Naive thymus-derived CD4-positive, alpha-beta T cell (primary cell): ENCODE measurements at regions of chr16 and their contacts with region 1.

Region 1: DNA sequence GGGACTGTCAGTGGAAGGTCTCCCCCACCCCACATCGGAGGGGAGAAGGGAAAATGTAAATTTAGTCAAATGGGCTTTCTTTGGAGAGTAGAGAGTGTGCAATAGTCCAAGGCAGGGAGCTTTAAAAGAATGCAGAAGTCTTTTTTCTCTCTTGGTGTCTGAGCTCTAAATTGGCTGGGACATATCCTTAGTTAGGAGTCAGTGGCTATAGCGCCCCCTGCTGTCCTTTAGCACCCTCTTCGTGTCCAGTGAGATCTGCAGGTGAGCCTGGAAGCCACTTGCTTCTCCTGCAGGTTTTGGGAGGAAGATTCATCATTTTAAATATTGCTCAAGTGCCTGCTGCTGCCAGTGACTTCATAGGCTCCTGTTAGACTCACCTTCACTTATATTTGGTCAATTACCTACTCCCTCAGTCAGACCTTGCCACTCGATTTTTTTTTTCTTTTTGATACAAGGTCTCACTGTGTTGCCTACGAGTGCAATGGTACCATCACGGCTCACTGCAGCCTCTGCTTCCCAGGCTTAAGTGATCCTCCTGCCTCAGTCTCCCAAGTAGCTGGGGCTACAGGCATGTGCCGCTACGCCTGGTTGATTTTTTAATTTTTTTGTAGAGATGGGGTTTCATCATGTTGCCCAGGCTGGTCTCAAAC is 174.8 kb downstream of the PRKCB start:
- DNase-seq: peak; percentile 46 to 82 (median 73)
- ATAC-seq: peak; percentile 58
- H3K4me3 ChIP-seq: no peak overlapping the region
- H3K4me3 Mint-ChIP-seq: no peak overlapping the region
- H3K27ac ChIP-seq: no peak overlapping the region
- H3K27ac Mint-ChIP-seq: peak overlapping the region in 5 of 9 donors; percentile 1 to 78 (median 37)
- H3K4me1 ChIP-seq: peaks cover 41 to 43% of the 10 kb centered on the region in 2 donors
- H3K4me1 Mint-ChIP-seq: peaks cover 46 to 70% (median 57%) of the 10 kb centered on the region in 7 donors
- H3K27me3 ChIP-seq: no peaks in the 10 kb centered on the region
- H3K27me3 Mint-ChIP-seq: no peaks in the 10 kb centered on the region

Region 2: GRCh38 chr16:23678430-23679273 is 331.9 kb before region 1 on chr16 and contains the start of gene PLK1:
- CTCF ChIA-PET with region 1: no interaction called
- POLR2A ChIA-PET with region 1: interaction called, 3 read pairs
- intact Hi-C with region 1: loop called in 1 of 2 experiments (anchors 10 kb)
- DNase-seq: peak; percentile 44 to 85 (median 65)
- ATAC-seq: peak; percentile 96
- H3K4me3 ChIP-seq: peak within 1 kb of the TSS; percentile 80
- H3K4me3 Mint-ChIP-seq: peak within 1 kb of the TSS; percentile 61 to 96 (median 84)
- H3K27ac ChIP-seq: peak within 1 kb of the TSS; percentile 39
- H3K27ac Mint-ChIP-seq: peak within 1 kb of the TSS in 4 of 9 donors; percentile 50 to 73 (median 60)
- H3K4me1 ChIP-seq: peaks cover 9 to 10% of the 10 kb centered on the region in 2 donors
- H3K4me1 Mint-ChIP-seq: peaks cover 10 to 44% (median 23%) of the 10 kb centered on the region in 7 donors
- H3K27me3 ChIP-seq: no peaks in the 10 kb centered on the region
- H3K27me3 Mint-ChIP-seq: peaks cover 0 to 9% (median 0%) of the 10 kb centered on the region in 5 donors
- total RNA-seq, gene PLK1: 0.45 to 65.0 (median 3.2) TPM

Region 3: DNA sequence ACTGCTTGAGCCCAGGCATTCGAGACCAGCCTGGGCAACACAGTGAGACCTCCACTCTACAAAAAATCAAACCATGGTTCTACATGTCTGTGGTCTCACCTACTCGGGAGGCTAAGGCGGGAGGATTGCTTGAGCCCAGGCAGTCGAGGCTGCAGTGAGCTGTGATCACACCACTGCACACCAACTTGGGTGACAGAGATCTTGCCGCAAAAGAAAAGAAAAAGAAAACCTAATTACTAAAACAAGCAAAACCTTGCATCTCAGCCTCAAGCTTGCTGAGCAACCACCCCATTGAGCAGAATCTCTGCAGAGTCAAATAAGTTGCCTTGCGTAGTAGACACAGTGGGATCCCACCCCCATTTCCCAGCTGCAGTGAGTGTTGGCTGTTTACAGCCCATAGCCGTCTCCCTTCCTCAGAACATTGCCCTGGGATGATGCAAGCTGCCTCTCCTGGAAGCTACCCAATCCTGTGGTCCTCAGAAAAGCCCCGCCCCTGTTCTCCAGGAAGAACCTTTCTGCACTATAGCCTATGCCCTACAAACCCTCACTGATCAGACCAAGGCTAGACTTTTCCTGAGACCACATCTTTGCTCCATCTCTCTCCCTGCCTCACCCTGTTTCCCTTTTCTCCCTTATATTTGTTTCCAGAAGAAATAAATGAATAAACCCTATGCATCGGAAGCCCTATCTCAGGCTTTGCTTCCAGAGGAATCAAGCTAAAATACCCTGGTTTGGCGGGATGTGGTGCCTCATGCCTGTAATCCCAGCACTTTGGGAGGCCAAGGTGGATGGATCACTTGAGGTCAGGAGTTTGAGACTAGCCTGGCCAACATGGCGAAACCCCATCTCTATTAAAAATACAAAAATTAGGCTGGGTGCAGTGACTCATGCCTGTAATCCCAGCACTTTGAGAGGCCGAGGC is 280.8 kb before region 1 on chr16:
- CTCF ChIA-PET with region 1: interaction called, 3 read pairs
- POLR2A ChIA-PET with region 1: no interaction called
- intact Hi-C with region 1: loop called in 1 of 2 experiments (anchors 10 kb)
- DNase-seq: no peak
- ATAC-seq: no peak
- H3K4me3 ChIP-seq: no peak overlapping the region
- H3K4me3 Mint-ChIP-seq: no peak overlapping the region
- H3K27ac ChIP-seq: no peak overlapping the region
- H3K27ac Mint-ChIP-seq: no peak overlapping the region
- H3K4me1 ChIP-seq: no peaks in the 10 kb centered on the region
- H3K4me1 Mint-ChIP-seq: peaks cover 0 to 8% (median 4%) of the 10 kb centered on the region in 7 donors
- H3K27me3 ChIP-seq: no peaks in the 10 kb centered on the region
- H3K27me3 Mint-ChIP-seq: peaks cover 4 to 23% (median 13%) of the 10 kb centered on the region in 5 donors

Region 4: GRCh38 chr16:23835390-23836077 is 175.0 kb before region 1 on chr16 and contains the start of gene PRKCB:
- CTCF ChIA-PET with region 1: interaction called, 7 read pairs
- POLR2A ChIA-PET with region 1: interaction called, 5 read pairs
- intact Hi-C with region 1: loop called (anchors 1 to 2 kb)
- DNase-seq: peak; percentile 83 to 98 (median 90)
- ATAC-seq: peak; percentile 97
- H3K4me3 ChIP-seq: peak within 1 kb of the TSS; percentile 65
- H3K4me3 Mint-ChIP-seq: peak within 1 kb of the TSS; percentile 88 to 100 (median 98)
- H3K27ac ChIP-seq: peak within 1 kb of the TSS; percentile 65
- H3K27ac Mint-ChIP-seq: peak within 1 kb of the TSS; percentile 69 to 95 (median 85)
- H3K4me1 ChIP-seq: peaks cover 25 to 35% of the 10 kb centered on the region in 2 donors
- H3K4me1 Mint-ChIP-seq: peaks cover 52 to 65% (median 60%) of the 10 kb centered on the region in 7 donors
- H3K27me3 ChIP-seq: no peaks in the 10 kb centered on the region
- H3K27me3 Mint-ChIP-seq: peaks cover 0 to 3% (median 0%) of the 10 kb centered on the region in 5 donors
- total RNA-seq, gene PRKCB: 72.5 to 180 (median 73.1) TPM

Region 5: GRCh38 chr16:23863511-23864422 is 146.8 kb before region 1 on chr16:
- CTCF ChIA-PET with region 1: interaction called, 6 read pairs
- POLR2A ChIA-PET with region 1: interaction called, 3 read pairs
- intact Hi-C with region 1: loop called in 1 of 2 experiments (anchors 1 kb)
- DNase-seq: peak in 7 of 9 donors; percentile 24 to 70 (median 67)
- ATAC-seq: peak; percentile 92
- H3K4me3 ChIP-seq: peak overlapping the region; percentile 59
- H3K4me3 Mint-ChIP-seq: peak overlapping the region; percentile 84 to 92 (median 89)
- H3K27ac ChIP-seq: peak overlapping the region; percentile 61
- H3K27ac Mint-ChIP-seq: peak overlapping the region; percentile 87 to 95 (median 93)
- H3K4me1 ChIP-seq: peaks cover 43 to 69% of the 10 kb centered on the region in 2 donors
- H3K4me1 Mint-ChIP-seq: peaks cover 63 to 96% (median 87%) of the 10 kb centered on the region in 7 donors
- H3K27me3 ChIP-seq: no peaks in the 10 kb centered on the region
- H3K27me3 Mint-ChIP-seq: no peaks in the 10 kb centered on the region

Region 6: DNA sequence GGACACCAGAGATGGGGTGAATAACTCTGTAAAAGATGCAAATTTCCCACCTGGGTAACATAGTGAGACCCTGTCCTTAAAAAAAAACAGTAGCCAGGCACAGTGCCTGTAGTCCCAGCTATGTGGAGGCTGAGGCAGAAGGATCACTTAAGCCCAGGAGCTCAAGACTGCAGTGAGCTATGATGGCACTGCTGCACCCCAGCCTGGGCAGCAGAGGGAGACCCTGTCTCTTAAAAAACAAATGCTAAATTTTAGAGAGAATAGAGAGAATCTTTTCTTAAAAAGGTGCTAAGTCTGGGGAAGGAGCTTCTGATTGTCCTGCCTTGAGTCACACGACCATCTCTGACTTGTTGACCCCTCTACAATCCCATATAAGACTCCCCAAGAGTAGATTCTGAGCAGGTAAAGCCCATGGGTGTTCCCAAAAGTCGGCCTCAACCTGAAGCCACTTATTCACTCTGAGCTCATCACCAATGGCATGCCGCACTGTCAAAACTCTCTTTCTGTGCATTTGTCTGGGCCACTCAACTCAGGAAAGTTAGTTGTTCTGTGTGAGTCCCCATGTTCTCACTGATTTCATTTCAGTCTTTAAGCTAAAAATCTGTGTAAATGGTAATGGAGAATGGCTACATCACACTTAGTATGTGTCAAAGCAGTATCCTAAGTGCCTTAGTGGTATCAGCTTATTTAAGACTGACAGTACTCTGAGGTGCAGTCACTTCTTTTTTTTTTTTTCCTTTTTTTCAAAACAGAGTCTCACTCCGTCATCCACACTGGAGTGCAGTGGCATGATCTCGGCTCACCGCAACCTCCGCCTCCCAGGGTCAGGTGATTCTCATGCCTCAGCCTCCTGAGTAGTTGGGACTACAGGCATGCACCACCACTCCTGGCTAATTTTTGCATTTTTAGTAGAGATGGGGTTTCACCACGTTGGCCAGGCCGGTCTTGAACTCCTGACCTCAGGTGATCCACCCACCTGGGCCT is 133.2 kb before region 1 on chr16:
- CTCF ChIA-PET with region 1: interaction called, 224 read pairs
- POLR2A ChIA-PET with region 1: interaction called, 14 read pairs
- intact Hi-C with region 1: loop called (anchors 1 kb)
- DNase-seq: peak in 5 of 9 donors; percentile 31 to 43 (median 35)
- ATAC-seq: peak; percentile 43
- H3K4me3 ChIP-seq: no peak overlapping the region
- H3K4me3 Mint-ChIP-seq: peak overlapping the region in 1 of 10 donors; percentile 1
- H3K27ac ChIP-seq: no peak overlapping the region
- H3K27ac Mint-ChIP-seq: peak overlapping the region in 6 of 9 donors; percentile 10 to 93 (median 74)
- H3K4me1 ChIP-seq: peaks cover 26 to 27% of the 10 kb centered on the region in 2 donors
- H3K4me1 Mint-ChIP-seq: peaks cover 53 to 77% (median 71%) of the 10 kb centered on the region in 7 donors
- H3K27me3 ChIP-seq: no peaks in the 10 kb centered on the region
- H3K27me3 Mint-ChIP-seq: no peaks in the 10 kb centered on the region

Region 7: DNA sequence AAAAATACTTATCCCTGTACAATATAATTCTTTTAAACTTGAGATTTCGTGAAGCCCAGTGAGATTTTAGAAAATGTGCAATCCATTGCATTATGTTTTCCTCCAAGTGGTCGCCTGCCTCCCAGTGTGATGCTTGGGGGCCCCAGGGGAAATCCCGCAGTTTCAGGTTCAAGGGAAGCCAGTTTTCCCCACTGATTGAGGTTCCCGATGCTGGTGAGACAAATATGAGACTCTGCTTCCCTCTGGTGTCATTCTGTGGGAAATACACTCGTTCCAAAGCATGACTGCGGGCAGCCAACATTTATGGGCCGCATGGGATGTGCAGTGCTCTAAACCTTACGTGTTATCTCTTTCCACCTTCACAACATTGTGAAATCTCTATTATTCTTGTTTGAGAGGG is 26.0 kb after region 1 on chr16:
- CTCF ChIA-PET with region 1: interaction called, 16 read pairs
- POLR2A ChIA-PET with region 1: no interaction called
- intact Hi-C with region 1: loop called (anchors 1 kb)
- DNase-seq: peak in 8 of 9 donors; percentile 11 to 62 (median 30)
- ATAC-seq: peak; percentile 55
- H3K4me3 ChIP-seq: no peak overlapping the region
- H3K4me3 Mint-ChIP-seq: peak overlapping the region in 4 of 10 donors; percentile 18 to 92 (median 49)
- H3K27ac ChIP-seq: no peak overlapping the region
- H3K27ac Mint-ChIP-seq: peak overlapping the region in 4 of 9 donors; percentile 19 to 92 (median 54)
- H3K4me1 ChIP-seq: peaks cover 14 to 38% of the 10 kb centered on the region in 2 donors
- H3K4me1 Mint-ChIP-seq: peaks cover 27 to 51% (median 45%) of the 10 kb centered on the region in 7 donors
- H3K27me3 ChIP-seq: no peaks in the 10 kb centered on the region
- H3K27me3 Mint-ChIP-seq: no peaks in the 10 kb centered on the region